Activated T-helper 1 cell treated with anti-CD3 and anti-CD28 coated beads, Interleukin-12 subunit alpha, Interleukin-12 subunit beta, Interleukin-2, Interleukin-4 antibody, amounts not matched to agents 30 ng/mL and 10 ng/mL and 1 ng/mL, durations not matched to agents 14 hours and 24 hours and 36 hours (primary cell): ENCODE measurements at regions of chr6 and their contacts with region 1.

Region 1: GRCh38 chr6:15023448-15023847 is 222.4 kb upstream of the JARID2 start:
- DNase-seq: peak; percentile 48
- H3K4me3 Mint-ChIP-seq: peak overlapping the region; percentile 31
- H3K27ac Mint-ChIP-seq: peak overlapping the region; percentile 94
- H3K4me1 Mint-ChIP-seq: peaks cover 53% of the 10 kb centered on the region
- H3K27me3 Mint-ChIP-seq: no peaks in the 10 kb centered on the region

Region 2: GRCh38 chr6:14743465-14744211 is 279.8 kb before region 1 on chr6:
- intact Hi-C with region 1: no loop called
- DNase-seq: peak; percentile 59
- H3K4me3 Mint-ChIP-seq: peak overlapping the region; percentile 66
- H3K27ac Mint-ChIP-seq: peak overlapping the region; percentile 94
- H3K4me1 Mint-ChIP-seq: peaks cover 80% of the 10 kb centered on the region
- H3K27me3 Mint-ChIP-seq: no peaks in the 10 kb centered on the region

Region 3: GRCh38 chr6:15033850-15034203 is 10.4 kb after region 1 on chr6:
- intact Hi-C with region 1: loop called (anchors 1 kb)
- DNase-seq: no peak
- H3K4me3 Mint-ChIP-seq: no peak overlapping the region
- H3K27ac Mint-ChIP-seq: no peak overlapping the region
- H3K4me1 Mint-ChIP-seq: peaks cover 33% of the 10 kb centered on the region
- H3K27me3 Mint-ChIP-seq: no peaks in the 10 kb centered on the region

Region 4: GRCh38 chr6:15184441-15184861 is 161.0 kb after region 1 on chr6:
- intact Hi-C with region 1: loop called (anchors 1 kb)
- DNase-seq: peak; percentile 25
- H3K4me3 Mint-ChIP-seq: no peak overlapping the region
- H3K27ac Mint-ChIP-seq: peak overlapping the region; percentile 94
- H3K4me1 Mint-ChIP-seq: peaks cover 16% of the 10 kb centered on the region
- H3K27me3 Mint-ChIP-seq: no peaks in the 10 kb centered on the region